WTC11 (cell line): ENCODE measurements at regions of chr5 and their contacts with region 1.

Region 1: GRCh38 chr5:148730943-148731861 is 76.9 kb upstream of the HTR4 start:
- DNase-seq: peak; percentile 59
- ATAC-seq: peak; percentile 77
- H3K4me3 Mint-ChIP-seq: no peak overlapping the region
- H3K27ac Mint-ChIP-seq: no peak overlapping the region
- H3K4me1 Mint-ChIP-seq: peaks cover 18% of the 10 kb centered on the region
- H3K27me3 Mint-ChIP-seq: no peaks in the 10 kb centered on the region
- CTCF ChIP-seq: peak; percentile 64

Region 2: DNA sequence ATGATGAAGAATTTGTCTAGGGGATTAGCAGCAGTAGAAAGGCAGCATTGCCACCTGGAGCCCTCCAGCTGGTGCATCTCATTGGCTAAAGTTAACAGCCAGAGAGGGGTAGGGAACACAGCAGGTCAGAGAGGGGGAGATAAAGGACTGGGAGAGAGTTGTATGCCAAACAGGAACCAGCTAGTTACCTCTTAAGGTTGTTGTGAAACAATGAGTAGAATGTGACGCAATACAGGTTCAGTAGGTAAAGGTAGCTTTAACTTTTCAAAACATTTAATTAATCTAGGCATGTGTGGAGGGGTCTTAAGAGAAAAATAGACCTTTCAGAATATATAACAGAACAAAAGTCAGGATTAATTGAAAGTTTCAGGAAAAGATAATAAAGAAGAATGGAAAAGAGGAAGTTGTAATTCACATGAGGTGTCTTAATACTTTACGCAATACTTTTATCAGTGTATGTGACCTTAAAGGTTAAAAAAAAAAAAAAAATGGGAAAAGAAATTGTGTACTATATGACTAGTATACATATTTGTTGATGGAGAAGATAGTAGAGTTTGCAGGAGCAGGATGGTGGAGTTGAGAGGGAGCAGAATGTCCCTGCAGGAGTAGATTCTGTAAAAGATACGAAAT is 333.1 kb before region 1 on chr5:
- CTCF ChIA-PET with region 1: interaction called, 18 read pairs
- POLR2A ChIA-PET with region 1: interaction called, 3 read pairs
- DNase-seq: peak; percentile 61
- ATAC-seq: peak; percentile 99
- H3K4me3 Mint-ChIP-seq: peak overlapping the region; percentile 24
- H3K27ac Mint-ChIP-seq: peak overlapping the region; percentile 77
- H3K4me1 Mint-ChIP-seq: peaks cover 41% of the 10 kb centered on the region
- H3K27me3 Mint-ChIP-seq: no peaks in the 10 kb centered on the region
- CTCF ChIP-seq: no peak

Region 3: GRCh38 chr5:148482691-148483462 is 248.3 kb before region 1 on chr5:
- CTCF ChIA-PET with region 1: interaction called, 15 read pairs
- POLR2A ChIA-PET with region 1: no interaction called
- DNase-seq: peak; percentile 88
- ATAC-seq: peak; percentile 94
- H3K4me3 Mint-ChIP-seq: no peak overlapping the region; the same call in 1 of the 2 replicates
- H3K27ac Mint-ChIP-seq: no peak overlapping the region
- H3K4me1 Mint-ChIP-seq: peaks cover 7% of the 10 kb centered on the region
- H3K27me3 Mint-ChIP-seq: peaks cover 41% of the 10 kb centered on the region
- CTCF ChIP-seq: peak; percentile 74; the same call in 1 of the 2 replicates

Region 4: GRCh38 chr5:148641735-148642134 is 89.5 kb before region 1 on chr5:
- CTCF ChIA-PET with region 1: no interaction called
- POLR2A ChIA-PET with region 1: no interaction called
- DNase-seq: no peak
- ATAC-seq: no peak
- H3K4me3 Mint-ChIP-seq: no peak overlapping the region
- H3K27ac Mint-ChIP-seq: no peak overlapping the region
- H3K4me1 Mint-ChIP-seq: no peaks in the 10 kb centered on the region
- H3K27me3 Mint-ChIP-seq: no peaks in the 10 kb centered on the region
- CTCF ChIP-seq: no peak

Region 5: DNA sequence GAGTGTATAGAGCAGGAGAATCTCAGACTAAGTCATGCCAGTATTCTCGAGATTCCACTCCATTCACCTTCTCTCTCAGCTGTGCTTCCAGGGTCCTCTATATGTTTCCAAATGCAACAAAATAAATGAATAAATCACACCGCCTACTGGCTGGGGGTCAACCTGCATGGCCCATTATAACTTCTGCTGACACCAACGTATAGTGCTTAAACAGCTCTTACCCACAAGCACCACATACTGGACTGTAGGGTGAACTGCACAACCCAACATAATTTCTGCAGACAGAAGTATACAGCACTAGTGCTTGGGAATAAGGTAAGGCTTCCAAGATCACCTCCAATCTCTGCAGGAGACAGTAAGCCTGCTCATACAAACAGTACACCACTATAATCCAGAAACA is 43.8 kb before region 1 on chr5:
- CTCF ChIA-PET with region 1: interaction called, 13 read pairs
- POLR2A ChIA-PET with region 1: no interaction called
- DNase-seq: peak; percentile 50
- ATAC-seq: peak; percentile 100
- H3K4me3 Mint-ChIP-seq: no peak overlapping the region
- H3K27ac Mint-ChIP-seq: no peak overlapping the region
- H3K4me1 Mint-ChIP-seq: peaks cover 3% of the 10 kb centered on the region; the same call in 1 of the 2 replicates
- H3K27me3 Mint-ChIP-seq: no peaks in the 10 kb centered on the region; the same call in 1 of the 2 replicates
- CTCF ChIP-seq: peak; percentile 65

Region 6: GRCh38 chr5:148820461-148821395 is 89.5 kb after region 1 on chr5:
- CTCF ChIA-PET with region 1: interaction called, 12 read pairs
- POLR2A ChIA-PET with region 1: no interaction called
- DNase-seq: no peak
- ATAC-seq: peak; percentile 66
- H3K4me3 Mint-ChIP-seq: no peak overlapping the region
- H3K27ac Mint-ChIP-seq: no peak overlapping the region
- H3K4me1 Mint-ChIP-seq: peaks cover 29% of the 10 kb centered on the region
- H3K27me3 Mint-ChIP-seq: peaks cover 14% of the 10 kb centered on the region
- CTCF ChIP-seq: no peak

Region 7: GRCh38 chr5:149018909-149019443 is 287.8 kb after region 1 on chr5:
- CTCF ChIA-PET with region 1: interaction called, 13 read pairs
- POLR2A ChIA-PET with region 1: no interaction called
- DNase-seq: no peak
- ATAC-seq: peak; percentile 51; the same call in 1 of the 2 replicates
- H3K4me3 Mint-ChIP-seq: no peak overlapping the region
- H3K27ac Mint-ChIP-seq: no peak overlapping the region
- H3K4me1 Mint-ChIP-seq: peaks cover 16% of the 10 kb centered on the region
- H3K27me3 Mint-ChIP-seq: no peaks in the 10 kb centered on the region
- CTCF ChIP-seq: no peak